ENCODE measurements at regions of chr9 and their contacts with region 1.

Region 1: GRCh38 chr9:5593904-5594303 is 35.0 kb upstream of the RIC1 start:
- DNase-seq: no peak
- ATAC-seq: no peak
- H3K4me3 ChIP-seq: no peak overlapping the region
- H3K27ac ChIP-seq: no peak overlapping the region
- H3K4me1 ChIP-seq: no peaks in the 10 kb centered on the region
- H3K27me3 ChIP-seq: no peaks in the 10 kb centered on the region

Region 2: GRCh38 chr9:4740638-4741364 is 853.1 kb before region 1 on chr9 and contains the start of gene AK3:
- intact Hi-C with region 1: loop called in 1 of 4 experiments (anchors 10 kb)
- DNase-seq: peak; percentile 92 to 97 (median 95)
- ATAC-seq: peak; percentile 97
- H3K4me3 ChIP-seq: peak within 1 kb of the TSS; percentile 80
- H3K27ac ChIP-seq: peak within 1 kb of the TSS; percentile 62
- H3K4me1 ChIP-seq: peaks cover 9% of the 10 kb centered on the region
- H3K27me3 ChIP-seq: no peaks in the 10 kb centered on the region
- total RNA-seq, gene AK3: 111 to 153 (median 125) TPM

Region 3: DNA sequence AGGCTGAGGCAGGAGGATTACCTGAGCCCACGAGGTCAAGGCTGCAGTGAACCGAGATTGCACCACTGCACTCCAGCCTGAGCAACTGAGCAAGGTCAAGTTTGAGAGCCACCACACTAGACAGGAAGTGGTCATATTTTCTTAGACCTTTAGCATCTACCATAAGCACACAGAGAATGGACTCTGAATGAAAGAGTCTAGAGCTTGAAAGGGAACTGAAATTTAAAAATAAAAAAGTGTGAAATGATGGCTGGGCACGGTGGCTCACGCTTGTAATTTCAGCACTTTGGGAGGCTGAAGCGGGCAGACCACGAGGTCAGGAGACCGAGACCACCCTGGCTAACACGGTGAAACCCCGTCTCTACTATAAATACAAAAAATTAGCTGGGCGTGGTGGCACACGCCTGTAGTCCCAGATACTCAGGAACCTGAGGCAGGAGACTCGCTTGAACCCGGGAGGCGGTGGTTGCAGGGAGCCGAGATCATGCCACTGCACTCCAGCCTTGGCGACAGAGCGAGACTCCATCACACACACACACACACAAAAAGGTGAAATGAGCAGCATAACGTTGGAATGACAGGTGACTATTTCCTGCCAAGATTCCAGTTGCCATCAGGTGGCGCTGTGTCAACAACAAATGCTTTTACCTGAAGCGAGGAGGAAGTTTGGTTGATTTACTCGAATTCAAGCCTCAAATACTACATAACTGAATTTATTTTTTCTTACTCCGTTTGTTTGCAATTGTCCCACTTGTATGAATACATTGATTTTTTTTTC is 831.6 kb before region 1 on chr9:
- intact Hi-C with region 1: loop called in 2 of 4 experiments (anchors 10 kb)
- DNase-seq: peak; percentile 68 to 87 (median 77)
- ATAC-seq: peak; percentile 53 to 59
- H3K4me3 ChIP-seq: peak overlapping the region; percentile 41
- H3K27ac ChIP-seq: no peak overlapping the region
- H3K4me1 ChIP-seq: no peaks in the 10 kb centered on the region
- H3K27me3 ChIP-seq: no peaks in the 10 kb centered on the region

Region 4: GRCh38 chr9:5186416-5187169 is 407.3 kb before region 1 on chr9:
- intact Hi-C with region 1: loop called in 1 of 4 experiments (anchors 5 kb)
- DNase-seq: peak in 1 of 3 donors; percentile 71
- ATAC-seq: peak; percentile 66 to 67
- H3K4me3 ChIP-seq: no peak overlapping the region
- H3K27ac ChIP-seq: no peak overlapping the region
- H3K4me1 ChIP-seq: no peaks in the 10 kb centered on the region
- H3K27me3 ChIP-seq: no peaks in the 10 kb centered on the region

Region 5: GRCh38 chr9:5450359-5451091 is 143.4 kb before region 1 on chr9 and contains the start of gene CD274:
- intact Hi-C with region 1: loop called (anchors 2 to 10 kb)
- DNase-seq: peak; percentile 92 to 97 (median 96)
- ATAC-seq: peak; percentile 99
- H3K4me3 ChIP-seq: peak within 1 kb of the TSS; percentile 96
- H3K27ac ChIP-seq: peak within 1 kb of the TSS; percentile 85
- H3K4me1 ChIP-seq: peaks cover 4% of the 10 kb centered on the region
- H3K27me3 ChIP-seq: no peaks in the 10 kb centered on the region
- total RNA-seq, gene CD274: 8.8 to 12.0 (median 10.9) TPM

Measured in right cardiac atrium (tissue), 5 donors.